ENCODE measurements at regions of chr16 and their contacts with region 1.

Region 1: DNA sequence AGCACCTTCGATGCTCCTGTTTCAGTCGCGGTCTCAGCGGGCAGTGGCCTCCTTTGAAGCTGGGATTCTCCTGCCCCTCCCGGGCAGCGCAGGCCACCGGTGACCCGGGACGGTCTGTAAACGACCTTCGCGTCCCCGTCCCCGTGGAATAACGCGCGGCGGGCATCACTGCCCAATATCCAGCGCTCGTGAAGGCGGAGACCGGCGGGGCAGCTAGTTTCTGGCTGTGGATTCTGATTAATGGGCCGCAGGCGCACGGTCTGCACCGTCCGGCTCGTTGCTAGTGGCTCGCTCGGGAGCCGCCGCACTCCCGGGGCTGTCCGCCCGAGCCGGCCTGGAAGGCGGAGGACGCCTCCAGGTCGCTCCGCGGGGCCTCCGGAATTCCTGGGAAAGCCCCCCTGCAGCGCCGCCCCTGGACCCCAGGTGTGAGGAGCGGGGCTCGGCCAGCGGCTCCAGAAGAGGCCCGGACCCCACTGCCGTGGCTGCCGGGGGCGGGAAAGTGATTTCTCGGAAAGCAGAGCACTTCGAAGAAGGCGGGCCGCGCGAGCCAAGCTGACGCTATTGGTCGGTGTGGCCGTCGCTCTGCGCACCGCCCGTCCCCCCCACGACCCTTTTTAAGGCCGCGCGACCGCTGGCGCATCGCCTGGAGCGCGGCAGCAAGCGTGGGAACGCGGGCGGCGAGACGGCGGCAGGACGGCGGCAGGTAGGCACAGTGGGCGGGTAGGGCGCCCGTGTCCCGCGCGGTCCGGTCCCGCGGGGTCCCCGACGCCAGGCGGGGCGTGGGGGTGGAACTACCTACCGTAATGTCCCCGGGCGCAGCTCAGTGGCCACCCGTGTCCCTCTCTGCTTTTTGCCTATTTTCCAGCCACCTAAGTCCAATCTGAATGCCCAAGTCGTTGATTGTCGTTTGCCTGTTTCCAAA is at the start of gene IRF8:
- DNase-seq: peak; percentile 90
- ATAC-seq: peak; percentile 80
- H3K4me3 Mint-ChIP-seq: peak within 1 kb of the TSS; percentile 86
- H3K27ac Mint-ChIP-seq: peak within 1 kb of the TSS; percentile 90
- H3K4me1 Mint-ChIP-seq: peaks cover 38% of the 10 kb centered on the region
- H3K27me3 Mint-ChIP-seq: no peaks in the 10 kb centered on the region
- CTCF ChIP-seq: no peak
- total RNA-seq, gene IRF8: 221 to 224 TPM

Region 2: GRCh38 chr16:85916141-85916890 is 17.5 kb after region 1 on chr16:
- CTCF ChIA-PET with region 1: interaction called, 11 read pairs
- POLR2A ChIA-PET with region 1: interaction called, 141 read pairs
- intact Hi-C with region 1: no loop called
- DNase-seq: no peak
- ATAC-seq: no peak
- H3K4me3 Mint-ChIP-seq: no peak overlapping the region
- H3K27ac Mint-ChIP-seq: peak overlapping the region; percentile 44
- H3K4me1 Mint-ChIP-seq: peaks cover 31% of the 10 kb centered on the region
- H3K27me3 Mint-ChIP-seq: no peaks in the 10 kb centered on the region
- CTCF ChIP-seq: no peak

Region 3: GRCh38 chr16:85923153-85924021 is 24.6 kb after region 1 on chr16:
- CTCF ChIA-PET with region 1: interaction called, 3 read pairs
- POLR2A ChIA-PET with region 1: interaction called, 141 read pairs
- intact Hi-C with region 1: no loop called
- DNase-seq: no peak
- ATAC-seq: peak; percentile 22
- H3K4me3 Mint-ChIP-seq: no peak overlapping the region
- H3K27ac Mint-ChIP-seq: peak overlapping the region; percentile 59
- H3K4me1 Mint-ChIP-seq: peaks cover 47% of the 10 kb centered on the region
- H3K27me3 Mint-ChIP-seq: no peaks in the 10 kb centered on the region
- CTCF ChIP-seq: no peak

Region 4: GRCh38 chr16:85935974-85936760 is 37.4 kb after region 1 on chr16:
- CTCF ChIA-PET with region 1: interaction called, 9 read pairs
- POLR2A ChIA-PET with region 1: interaction called, 20 read pairs
- intact Hi-C with region 1: no loop called
- DNase-seq: peak; percentile 93
- ATAC-seq: peak; percentile 84
- H3K4me3 Mint-ChIP-seq: peak overlapping the region; percentile 64
- H3K27ac Mint-ChIP-seq: peak overlapping the region; percentile 99
- H3K4me1 Mint-ChIP-seq: peaks cover 72% of the 10 kb centered on the region
- H3K27me3 Mint-ChIP-seq: no peaks in the 10 kb centered on the region
- CTCF ChIP-seq: no peak

Region 5: DNA sequence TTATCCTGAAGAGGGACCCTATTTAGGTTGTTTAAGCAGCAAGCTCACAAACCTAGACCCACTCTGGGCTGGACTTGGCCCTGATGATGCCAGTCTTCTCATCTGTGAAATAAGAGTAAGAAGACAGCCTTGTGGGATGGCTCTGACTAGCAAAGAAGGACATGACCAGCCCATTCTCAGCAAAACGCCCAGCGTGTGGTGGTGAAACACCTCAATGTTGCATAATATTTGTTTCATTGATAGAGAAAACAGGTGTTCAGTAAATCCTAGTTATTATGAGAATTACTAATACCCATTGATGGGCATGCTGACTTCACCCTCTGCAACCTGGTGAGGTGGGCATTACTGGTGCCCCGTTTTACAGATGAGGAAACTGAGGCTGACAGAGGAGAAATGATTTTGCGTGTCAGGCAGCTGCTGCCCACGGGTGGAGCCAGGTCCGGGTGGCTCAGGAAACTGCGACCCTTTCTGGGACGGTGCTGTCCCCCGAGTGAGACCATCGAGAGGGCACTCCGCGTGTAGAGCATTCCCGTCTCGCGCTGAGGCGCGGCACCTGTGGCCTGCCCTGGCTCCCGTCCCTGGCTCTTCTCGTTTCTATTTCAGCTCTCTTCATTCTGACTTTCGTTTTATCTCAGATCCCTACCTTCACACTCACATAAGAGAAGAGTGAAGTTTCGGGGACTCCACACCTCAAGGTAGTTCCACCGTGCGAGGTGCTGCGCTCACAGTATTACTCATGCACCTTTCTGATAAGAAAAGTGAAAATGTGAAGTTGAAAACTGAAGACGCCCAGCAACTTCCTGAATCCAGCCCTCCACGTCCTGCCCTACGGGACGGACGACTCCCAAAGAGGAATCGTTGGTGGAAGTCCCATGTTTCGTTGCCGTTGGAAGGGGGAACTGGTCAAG is 48.7 kb after region 1 on chr16:
- CTCF ChIA-PET with region 1: interaction called, 10 read pairs
- POLR2A ChIA-PET with region 1: interaction called, 43 read pairs
- intact Hi-C with region 1: no loop called
- DNase-seq: peak; percentile 78
- ATAC-seq: peak; percentile 78
- H3K4me3 Mint-ChIP-seq: peak overlapping the region; percentile 53
- H3K27ac Mint-ChIP-seq: peak overlapping the region; percentile 96
- H3K4me1 Mint-ChIP-seq: peaks cover 75% of the 10 kb centered on the region
- H3K27me3 Mint-ChIP-seq: no peaks in the 10 kb centered on the region
- CTCF ChIP-seq: no peak